Activated CD4-positive, alpha-beta T cell treated with anti-CD3 and anti-CD28 coated beads for 36 hours (primary cell): ENCODE measurements at regions of chr1 and their contacts with region 1.

Region 1: DNA sequence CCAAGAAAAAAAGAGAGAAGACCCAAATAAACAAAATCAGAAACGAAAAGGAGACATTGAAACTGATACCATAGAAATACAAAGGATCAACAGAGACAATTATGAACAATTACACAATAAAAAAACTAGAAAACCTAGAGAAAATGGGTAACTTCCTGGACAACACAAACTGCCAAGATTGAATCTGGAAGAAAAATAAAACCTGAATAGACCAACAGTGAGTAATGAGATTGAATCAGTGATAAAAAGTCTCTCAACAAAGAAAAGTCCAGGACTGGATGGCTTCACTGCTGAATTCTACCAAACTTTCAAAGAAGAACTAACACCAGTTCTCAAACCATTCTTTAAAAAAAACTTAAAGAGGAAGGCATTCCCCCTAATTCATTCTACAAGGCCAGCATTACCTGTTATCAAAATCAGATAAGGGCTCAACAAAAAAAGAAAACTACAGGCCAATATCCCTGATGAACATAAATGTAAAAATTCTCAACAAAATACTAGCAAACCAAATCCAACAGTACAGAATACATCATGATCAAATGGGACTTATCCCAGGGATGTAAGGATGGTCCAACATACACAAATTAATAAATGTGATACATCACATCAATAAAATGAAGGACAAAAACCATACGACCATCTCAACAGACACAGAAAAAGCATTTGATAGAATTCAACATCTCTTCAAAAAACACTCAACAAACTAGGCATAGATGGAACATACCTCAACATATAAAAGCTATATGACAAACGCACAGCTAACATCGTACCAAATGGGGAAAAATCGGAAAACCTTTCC is 119.9 kb downstream of the ACBD6 start:
- DNase-seq: no peak
- ATAC-seq: no peak
- H3K4me3 Mint-ChIP-seq: no peak overlapping the region
- H3K27ac Mint-ChIP-seq: no peak overlapping the region
- H3K4me1 Mint-ChIP-seq: peaks cover 36% of the 10 kb centered on the region
- H3K27me3 Mint-ChIP-seq: no peaks in the 10 kb centered on the region

Region 2: GRCh38 chr1:180502360-180503273 is 120.1 kb after region 1 on chr1 and contains the start of gene ACBD6:
- CTCF ChIA-PET with region 1: no interaction called
- POLR2A ChIA-PET with region 1: no interaction called
- intact Hi-C with region 1: no loop called
- DNase-seq: peak; percentile 94
- ATAC-seq: peak; percentile 95
- H3K4me3 Mint-ChIP-seq: peak within 1 kb of the TSS; percentile 96
- H3K27ac Mint-ChIP-seq: peak within 1 kb of the TSS; percentile 97
- H3K4me1 Mint-ChIP-seq: peaks cover 33% of the 10 kb centered on the region
- H3K27me3 Mint-ChIP-seq: no peaks in the 10 kb centered on the region
- total RNA-seq, gene ACBD6: 45.6 to 46.8 TPM

Region 3: GRCh38 chr1:180586671-180587155 is 204.2 kb after region 1 on chr1:
- CTCF ChIA-PET with region 1: no interaction called
- POLR2A ChIA-PET with region 1: no interaction called
- intact Hi-C with region 1: loop called in 1 of 2 experiments (anchors 10 kb)
- DNase-seq: peak; percentile 27
- ATAC-seq: peak; percentile 77
- H3K4me3 Mint-ChIP-seq: no peak overlapping the region
- H3K27ac Mint-ChIP-seq: peak overlapping the region; percentile 83
- H3K4me1 Mint-ChIP-seq: peaks cover 18% of the 10 kb centered on the region
- H3K27me3 Mint-ChIP-seq: peaks cover 6% of the 10 kb centered on the region

Region 4: GRCh38 chr1:180674603-180675530 is 292.4 kb after region 1 on chr1:
- CTCF ChIA-PET with region 1: no interaction called
- POLR2A ChIA-PET with region 1: no interaction called
- intact Hi-C with region 1: loop called in 1 of 2 experiments (anchors 10 kb)
- DNase-seq: no peak
- ATAC-seq: no peak
- H3K4me3 Mint-ChIP-seq: no peak overlapping the region
- H3K27ac Mint-ChIP-seq: no peak overlapping the region
- H3K4me1 Mint-ChIP-seq: peaks cover 3% of the 10 kb centered on the region
- H3K27me3 Mint-ChIP-seq: no peaks in the 10 kb centered on the region

Region 5: DNA sequence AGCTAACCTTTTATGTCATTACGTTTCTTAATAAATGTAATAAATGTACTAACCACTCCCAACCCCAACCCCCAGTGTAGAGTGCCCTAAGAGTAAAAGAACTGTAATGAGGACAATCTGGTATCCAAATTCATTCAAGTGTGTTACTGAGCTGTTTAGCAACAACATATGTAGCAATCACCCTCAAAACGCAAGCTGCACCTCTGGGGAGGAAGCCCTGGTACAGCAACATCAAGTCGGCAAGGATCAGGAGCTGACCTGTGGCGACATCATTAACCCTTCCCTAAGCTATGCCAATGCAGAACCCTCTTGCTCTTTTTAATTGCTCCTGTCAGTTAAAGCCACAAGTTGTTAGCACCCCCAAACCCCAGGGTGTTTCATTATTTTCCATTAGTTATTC is 593.0 kb after region 1 on chr1:
- CTCF ChIA-PET with region 1: no interaction called
- POLR2A ChIA-PET with region 1: no interaction called
- intact Hi-C with region 1: no loop called
- DNase-seq: no peak
- ATAC-seq: no peak
- H3K4me3 Mint-ChIP-seq: no peak overlapping the region
- H3K27ac Mint-ChIP-seq: no peak overlapping the region
- H3K4me1 Mint-ChIP-seq: peaks cover 20% of the 10 kb centered on the region
- H3K27me3 Mint-ChIP-seq: no peaks in the 10 kb centered on the region